Activated naive CD4-positive, alpha-beta T cell treated with anti-CD3 and anti-CD28 coated beads for 36 hours (primary cell): ENCODE measurements at regions of chr15 and their contacts with region 1.

Region 1: GRCh38 chr15:63048115-63048775 is 5.7 kb downstream of the TPM1 start:
- DNase-seq: peak; percentile 84
- H3K4me3 Mint-ChIP-seq: peak overlapping the region; percentile 84
- H3K27ac Mint-ChIP-seq: peak overlapping the region; percentile 17
- H3K4me1 Mint-ChIP-seq: peaks cover 20% of the 10 kb centered on the region
- H3K27me3 Mint-ChIP-seq: peaks cover 30% of the 10 kb centered on the region

Region 2: GRCh38 chr15:62782039-62782791 is 266.0 kb before region 1 on chr15:
- CTCF ChIA-PET with region 1: no interaction called
- intact Hi-C with region 1: loop called (anchors 2 kb)
- DNase-seq: peak; percentile 25
- H3K4me3 Mint-ChIP-seq: no peak overlapping the region
- H3K27ac Mint-ChIP-seq: no peak overlapping the region
- H3K4me1 Mint-ChIP-seq: no peaks in the 10 kb centered on the region
- H3K27me3 Mint-ChIP-seq: no peaks in the 10 kb centered on the region

Region 3: GRCh38 chr15:62857411-62857853 is 190.8 kb before region 1 on chr15:
- CTCF ChIA-PET with region 1: no interaction called
- intact Hi-C with region 1: no loop called
- DNase-seq: peak; percentile 14
- H3K4me3 Mint-ChIP-seq: no peak overlapping the region
- H3K27ac Mint-ChIP-seq: no peak overlapping the region
- H3K4me1 Mint-ChIP-seq: no peaks in the 10 kb centered on the region
- H3K27me3 Mint-ChIP-seq: peaks cover 13% of the 10 kb centered on the region

Region 4: DNA sequence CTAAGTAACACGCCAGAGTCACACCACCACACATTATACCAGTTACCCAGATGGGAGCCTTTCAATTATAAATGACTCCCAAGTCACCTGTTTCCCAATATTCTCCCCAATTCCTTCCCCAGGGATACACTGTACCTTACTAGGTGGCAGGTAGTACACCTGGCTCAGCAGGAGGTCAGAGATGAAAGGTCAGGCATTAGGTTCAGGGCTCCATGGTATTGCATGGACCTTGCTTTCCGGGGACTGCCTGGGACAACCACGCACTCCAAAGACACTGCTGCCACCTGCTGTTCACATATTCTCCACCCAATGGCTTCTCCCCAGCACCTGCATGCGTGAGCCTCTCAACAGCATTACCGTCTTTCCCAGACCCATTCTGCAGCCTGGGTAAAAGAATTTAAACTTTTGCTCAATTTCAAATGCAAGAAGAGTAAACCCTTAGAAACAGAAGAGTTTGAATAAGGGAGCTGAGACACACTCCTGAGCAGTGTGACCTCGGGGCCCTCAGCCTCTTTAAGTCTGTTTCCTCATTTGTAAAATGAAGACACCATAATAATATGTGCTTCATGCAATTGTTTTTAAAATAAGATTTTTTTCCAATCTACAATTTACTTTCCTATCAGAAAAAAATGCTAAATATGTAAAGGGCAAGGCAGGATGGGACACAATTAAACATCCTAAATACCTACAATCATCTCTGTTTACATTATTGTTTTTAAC is 45.4 kb after region 1 on chr15:
- CTCF ChIA-PET with region 1: interaction called, 38 read pairs
- intact Hi-C with region 1: loop called (anchors 1 kb)
- DNase-seq: peak; percentile 89
- H3K4me3 Mint-ChIP-seq: no peak overlapping the region
- H3K27ac Mint-ChIP-seq: no peak overlapping the region
- H3K4me1 Mint-ChIP-seq: no peaks in the 10 kb centered on the region
- H3K27me3 Mint-ChIP-seq: no peaks in the 10 kb centered on the region

Region 5: DNA sequence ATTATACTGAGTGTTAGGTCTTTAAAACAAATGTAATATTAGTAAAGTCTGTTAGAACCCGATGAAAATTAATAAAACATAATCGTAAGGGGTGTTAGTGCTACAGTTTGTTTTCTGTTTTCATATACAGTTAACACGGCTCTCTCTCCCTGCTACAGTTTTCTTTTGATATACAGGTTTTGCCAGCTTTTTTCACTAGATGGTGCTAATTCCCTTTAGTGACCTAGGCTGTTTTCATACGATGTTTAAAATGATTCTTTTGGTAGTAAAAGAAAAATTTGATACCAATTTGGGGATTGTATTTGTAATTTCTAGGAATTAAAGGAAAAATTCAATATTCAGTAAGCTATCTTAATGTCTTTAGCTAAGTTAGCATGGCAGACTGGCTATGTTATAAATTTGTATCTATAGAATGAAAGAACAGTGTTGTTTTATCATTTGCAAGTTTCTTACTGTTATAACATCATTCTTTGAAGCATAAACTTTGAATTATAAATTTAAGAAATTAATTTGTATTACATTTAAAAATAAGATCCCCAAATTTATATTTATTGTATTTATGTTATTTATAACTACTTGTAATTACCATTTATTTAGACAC is 240.6 kb after region 1 on chr15:
- CTCF ChIA-PET with region 1: no interaction called
- intact Hi-C with region 1: loop called (anchors 1 kb)
- DNase-seq: no peak
- H3K4me3 Mint-ChIP-seq: no peak overlapping the region
- H3K27ac Mint-ChIP-seq: no peak overlapping the region
- H3K4me1 Mint-ChIP-seq: peaks cover 4% of the 10 kb centered on the region
- H3K27me3 Mint-ChIP-seq: no peaks in the 10 kb centered on the region

Region 6: GRCh38 chr15:63402498-63403253 is 354.4 kb after region 1 on chr15:
- CTCF ChIA-PET with region 1: interaction called, 6 read pairs
- intact Hi-C with region 1: loop called (anchors 1 kb)
- DNase-seq: no peak
- H3K4me3 Mint-ChIP-seq: no peak overlapping the region
- H3K27ac Mint-ChIP-seq: no peak overlapping the region
- H3K4me1 Mint-ChIP-seq: peaks cover 5% of the 10 kb centered on the region
- H3K27me3 Mint-ChIP-seq: no peaks in the 10 kb centered on the region

Region 7: DNA sequence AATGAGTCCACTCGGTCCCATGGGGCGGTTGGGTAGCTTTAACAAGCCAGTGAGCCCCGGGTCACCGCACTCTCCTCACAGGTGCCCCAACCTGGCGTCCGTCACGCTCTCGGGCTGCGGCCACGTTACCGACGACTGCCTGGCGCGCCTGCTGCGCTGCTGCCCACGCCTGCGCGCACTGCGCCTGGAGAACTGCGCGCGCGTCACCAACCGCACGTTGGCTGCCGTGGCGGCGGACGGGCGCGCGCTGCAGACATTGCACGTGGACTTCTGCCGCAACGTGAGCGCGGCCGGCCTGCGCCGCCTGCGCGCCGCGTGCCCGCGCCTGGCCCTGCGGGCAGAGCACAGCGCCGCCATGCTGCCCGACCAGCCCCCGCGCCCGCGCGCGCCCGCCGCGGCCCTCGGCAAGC is 552.4 kb after region 1 on chr15:
- CTCF ChIA-PET with region 1: no interaction called
- intact Hi-C with region 1: loop called (anchors 5 kb)
- DNase-seq: peak; percentile 87
- H3K4me3 Mint-ChIP-seq: peak overlapping the region; percentile 90
- H3K27ac Mint-ChIP-seq: peak overlapping the region; percentile 93
- H3K4me1 Mint-ChIP-seq: peaks cover 54% of the 10 kb centered on the region
- H3K27me3 Mint-ChIP-seq: no peaks in the 10 kb centered on the region

Region 8: GRCh38 chr15:63881431-63881830 is 833.2 kb after region 1 on chr15:
- CTCF ChIA-PET with region 1: no interaction called
- intact Hi-C with region 1: no loop called
- DNase-seq: no peak
- H3K4me3 Mint-ChIP-seq: no peak overlapping the region
- H3K27ac Mint-ChIP-seq: no peak overlapping the region
- H3K4me1 Mint-ChIP-seq: peaks cover 2% of the 10 kb centered on the region
- H3K27me3 Mint-ChIP-seq: no peaks in the 10 kb centered on the region